Activated naive CD8-positive, alpha-beta T cell treated with anti-CD3 and anti-CD28 coated beads, Interleukin-2, amount 10 ng/mL, durations not matched to agents 7 days and 5 days (primary cell): ENCODE measurements at regions of chr5 and their contacts with region 1.

Region 1: GRCh38 chr5:129125810-129126209 is 31.3 kb downstream of the ISOC1 start:
- DNase-seq: no peak
- ATAC-seq: peak; percentile 50
- H3K4me3 Mint-ChIP-seq: peak overlapping the region; percentile 62
- H3K27ac Mint-ChIP-seq: peak overlapping the region; percentile 81
- H3K4me1 Mint-ChIP-seq: peaks cover 10% of the 10 kb centered on the region
- H3K27me3 Mint-ChIP-seq: no peaks in the 10 kb centered on the region

Region 2: GRCh38 chr5:129094087-129094923 is 31.5 kb before region 1 on chr5 and contains the start of gene ISOC1:
- POLR2A ChIA-PET with region 1: interaction called, 18 read pairs
- DNase-seq: peak; percentile 94
- ATAC-seq: peak; percentile 90
- H3K4me3 Mint-ChIP-seq: peak within 1 kb of the TSS; percentile 86
- H3K27ac Mint-ChIP-seq: peak within 1 kb of the TSS; percentile 71
- H3K4me1 Mint-ChIP-seq: peaks cover 24% of the 10 kb centered on the region
- H3K27me3 Mint-ChIP-seq: peaks cover 11% of the 10 kb centered on the region
- total RNA-seq, gene ISOC1: 14.5 to 16.2 TPM

Region 3: DNA sequence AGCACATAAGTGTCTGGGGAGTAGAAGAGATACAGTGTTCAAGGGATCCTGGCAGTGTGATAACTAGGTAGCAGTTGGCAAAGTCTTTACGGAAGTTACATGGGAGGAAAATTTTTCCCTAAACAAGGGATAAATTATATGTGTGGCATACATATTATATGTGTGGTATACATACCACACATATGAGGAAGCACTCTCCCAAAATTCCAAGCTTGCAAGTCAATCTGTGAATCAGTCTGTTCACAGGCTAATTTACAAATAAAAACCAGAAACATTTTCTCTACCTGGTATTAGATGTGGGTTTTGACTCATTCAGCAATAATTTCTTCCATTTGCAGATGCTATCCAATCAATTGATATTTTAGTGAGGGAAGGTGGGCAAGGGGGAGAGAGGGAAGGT is 78.7 kb after region 1 on chr5:
- POLR2A ChIA-PET with region 1: no interaction called
- DNase-seq: no peak
- ATAC-seq: no peak
- H3K4me3 Mint-ChIP-seq: no peak overlapping the region
- H3K27ac Mint-ChIP-seq: no peak overlapping the region
- H3K4me1 Mint-ChIP-seq: no peaks in the 10 kb centered on the region
- H3K27me3 Mint-ChIP-seq: no peaks in the 10 kb centered on the region